ENCODE measurements at regions of chr12 and their contacts with region 1.

Region 1: GRCh38 chr12:12916135-12916944 is 25.0 kb downstream of the GPRC5A start:
- H3K4me3 Mint-ChIP-seq: no peak overlapping the region
- H3K27ac Mint-ChIP-seq: no peak overlapping the region
- H3K4me1 Mint-ChIP-seq: peaks cover 21% of the 10 kb centered on the region
- H3K27me3 Mint-ChIP-seq: peaks cover 6% of the 10 kb centered on the region

Region 2: GRCh38 chr12:12983420-12984035 is 67.2 kb after region 1 on chr12:
- intact Hi-C with region 1: loop called (anchors 1 kb)
- H3K4me3 Mint-ChIP-seq: no peak overlapping the region
- H3K27ac Mint-ChIP-seq: no peak overlapping the region
- H3K4me1 Mint-ChIP-seq: no peaks in the 10 kb centered on the region
- H3K27me3 Mint-ChIP-seq: no peaks in the 10 kb centered on the region

Region 3: GRCh38 chr12:13233830-13234641 is 317.7 kb after region 1 on chr12:
- intact Hi-C with region 1: loop called (anchors 1 kb)
- H3K4me3 Mint-ChIP-seq: no peak overlapping the region
- H3K27ac Mint-ChIP-seq: no peak overlapping the region
- H3K4me1 Mint-ChIP-seq: no peaks in the 10 kb centered on the region
- H3K27me3 Mint-ChIP-seq: peaks cover under 1% of the 10 kb centered on the region